Lower leg skin (tissue), 4 donors: ENCODE measurements at regions of chr15 and their contacts with region 1.

Region 1: GRCh38 chr15:94324117-94324826 is 92.9 kb downstream of the MCTP2 start:
- DNase-seq: peak in 1 of 2 donors; percentile 20
- H3K4me3 ChIP-seq: no peak overlapping the region
- CTCF ChIP-seq: peak in 1 of 3 donors; percentile 59
- POLR2A ChIP-seq: no peak

Region 2: GRCh38 chr15:94168247-94168646 is 156.0 kb before region 1 on chr15:
- intact Hi-C with region 1: loop called (anchors 5 kb)
- DNase-seq: no peak
- H3K4me3 ChIP-seq: no peak overlapping the region
- CTCF ChIP-seq: no peak
- POLR2A ChIP-seq: no peak